GM13977 (cell line): ENCODE measurements at regions of chr4 and their contacts with region 1.

Region 1: DNA sequence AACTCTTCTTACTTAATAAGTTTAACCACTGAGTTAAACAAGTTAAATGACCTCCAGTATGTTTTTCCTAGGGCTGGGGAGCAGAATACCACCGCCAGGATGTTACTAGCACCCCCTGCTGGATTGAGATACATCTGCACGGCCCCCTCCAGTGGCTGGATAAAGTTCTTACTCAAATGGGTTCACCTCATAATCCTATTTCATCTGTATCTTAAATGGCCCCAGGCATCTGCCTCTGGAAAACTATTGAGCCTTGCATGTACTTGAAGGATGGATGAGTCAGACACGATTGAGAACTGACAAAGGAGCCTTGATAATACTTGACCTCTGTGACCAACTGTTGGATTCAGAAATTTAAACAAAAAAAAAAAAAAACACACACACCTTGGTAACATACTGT is 61.5 kb upstream of the MMAA start:
- DNase-seq: peak; percentile 61
- CTCF ChIP-seq: peak; percentile 93

Region 2: DNA sequence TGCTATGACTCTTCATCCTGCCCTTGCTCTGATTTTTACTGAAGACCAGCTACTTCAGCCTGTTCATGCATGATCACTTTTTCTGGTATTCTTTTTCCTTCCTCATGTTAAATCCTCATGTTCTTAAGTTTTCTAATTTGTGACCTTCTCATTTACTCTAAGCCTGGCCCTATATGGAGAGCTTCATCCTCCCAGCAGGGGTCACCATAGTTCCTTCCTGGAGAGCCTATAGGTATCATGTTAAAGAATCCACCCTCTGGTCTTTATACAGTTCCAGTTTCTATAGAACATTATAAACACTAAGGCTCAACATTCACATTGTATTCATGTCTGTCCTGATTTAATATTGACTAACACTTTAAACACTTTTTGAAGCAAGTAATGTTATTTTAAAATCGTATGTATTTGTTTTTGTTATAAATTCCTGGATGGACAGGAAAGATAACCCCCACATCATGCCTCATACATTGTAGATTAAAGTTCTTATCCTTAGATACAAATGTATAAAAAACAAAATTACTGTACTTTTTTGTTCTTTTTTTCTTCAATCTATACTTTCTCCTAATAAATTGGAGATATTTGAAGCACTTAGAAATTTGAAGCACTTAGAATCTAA is 323.5 kb before region 1 on chr4:
- in situ Hi-C with region 1: loop called (anchors 25 kb)
- DNase-seq: peak; percentile 71
- CTCF ChIP-seq: peak; percentile 75